ENCODE measurements at regions of chr3 and their contacts with region 1.

Region 1: GRCh38 chr3:30347679-30348216 is 258.7 kb upstream of the TGFBR2 start:
- DNase-seq: peak; percentile 85
- H3K4me3 Mint-ChIP-seq: peak overlapping the region; percentile 53
- H3K27ac Mint-ChIP-seq: peak overlapping the region; percentile 82
- H3K4me1 Mint-ChIP-seq: peaks cover 63% of the 10 kb centered on the region
- H3K27me3 Mint-ChIP-seq: peaks cover 8% of the 10 kb centered on the region

Region 2: GRCh38 chr3:28840976-28841376 is 1506.8 kb before region 1 on chr3:
- intact Hi-C with region 1: loop called (anchors 5 kb)
- DNase-seq: peak; percentile 61
- H3K4me3 Mint-ChIP-seq: peak overlapping the region; percentile 24
- H3K27ac Mint-ChIP-seq: peak overlapping the region; percentile 76
- H3K4me1 Mint-ChIP-seq: peaks cover 19% of the 10 kb centered on the region
- H3K27me3 Mint-ChIP-seq: no peaks in the 10 kb centered on the region

Region 3: DNA sequence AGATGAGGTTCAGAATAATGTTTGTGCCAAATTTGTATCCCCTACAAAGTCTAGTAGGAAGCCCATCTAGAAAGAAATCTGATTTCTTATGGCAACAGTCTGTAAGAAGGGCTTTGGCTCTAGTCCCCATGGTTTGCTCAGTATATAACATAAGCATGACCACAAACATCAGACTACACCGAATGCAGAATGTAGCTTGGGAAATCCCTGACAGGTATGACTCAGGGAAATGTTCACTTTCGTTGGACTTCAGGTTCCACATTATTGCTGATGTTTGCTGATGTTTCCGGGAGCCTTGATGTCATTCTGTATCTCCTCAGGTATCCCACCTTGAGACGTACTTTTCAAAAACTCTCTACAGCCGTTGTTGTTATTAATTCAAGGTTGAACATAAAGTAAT is 45.7 kb before region 1 on chr3:
- intact Hi-C with region 1: loop called (anchors 2 kb)
- DNase-seq: peak; percentile 66
- H3K4me3 Mint-ChIP-seq: no peak overlapping the region
- H3K27ac Mint-ChIP-seq: no peak overlapping the region
- H3K4me1 Mint-ChIP-seq: peaks cover 11% of the 10 kb centered on the region
- H3K27me3 Mint-ChIP-seq: no peaks in the 10 kb centered on the region

Region 4: DNA sequence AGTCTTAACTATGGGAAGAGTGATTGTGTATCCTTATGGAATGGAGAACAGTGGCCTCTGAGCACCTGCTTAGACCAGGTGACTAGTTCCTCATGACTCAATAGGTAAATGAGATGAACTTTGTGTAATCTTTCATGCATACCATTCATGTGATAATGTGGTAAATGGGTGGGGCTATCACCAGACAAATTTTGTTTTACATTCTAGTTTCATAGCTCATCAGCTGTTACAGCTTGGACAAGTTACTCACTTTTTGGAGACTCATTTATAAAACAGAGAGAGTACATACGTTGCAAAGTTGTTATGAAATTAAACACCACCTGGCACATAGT is 155.0 kb after region 1 on chr3:
- intact Hi-C with region 1: loop called (anchors 5 kb)
- DNase-seq: no peak
- H3K4me3 Mint-ChIP-seq: no peak overlapping the region
- H3K27ac Mint-ChIP-seq: no peak overlapping the region
- H3K4me1 Mint-ChIP-seq: peaks cover 26% of the 10 kb centered on the region
- H3K27me3 Mint-ChIP-seq: no peaks in the 10 kb centered on the region

Region 5: GRCh38 chr3:30644593-30645012 is 296.9 kb after region 1 on chr3:
- intact Hi-C with region 1: loop called (anchors 5 kb)
- DNase-seq: peak; percentile 89
- H3K4me3 Mint-ChIP-seq: peak overlapping the region; percentile 61
- H3K27ac Mint-ChIP-seq: peak overlapping the region; percentile 93
- H3K4me1 Mint-ChIP-seq: peaks cover 78% of the 10 kb centered on the region
- H3K27me3 Mint-ChIP-seq: no peaks in the 10 kb centered on the region

Region 6: GRCh38 chr3:30751610-30752299 is 404.0 kb after region 1 on chr3:
- intact Hi-C with region 1: loop called (anchors 5 kb)
- DNase-seq: peak; percentile 83
- H3K4me3 Mint-ChIP-seq: no peak overlapping the region
- H3K27ac Mint-ChIP-seq: no peak overlapping the region
- H3K4me1 Mint-ChIP-seq: peaks cover 36% of the 10 kb centered on the region
- H3K27me3 Mint-ChIP-seq: no peaks in the 10 kb centered on the region

Region 7: DNA sequence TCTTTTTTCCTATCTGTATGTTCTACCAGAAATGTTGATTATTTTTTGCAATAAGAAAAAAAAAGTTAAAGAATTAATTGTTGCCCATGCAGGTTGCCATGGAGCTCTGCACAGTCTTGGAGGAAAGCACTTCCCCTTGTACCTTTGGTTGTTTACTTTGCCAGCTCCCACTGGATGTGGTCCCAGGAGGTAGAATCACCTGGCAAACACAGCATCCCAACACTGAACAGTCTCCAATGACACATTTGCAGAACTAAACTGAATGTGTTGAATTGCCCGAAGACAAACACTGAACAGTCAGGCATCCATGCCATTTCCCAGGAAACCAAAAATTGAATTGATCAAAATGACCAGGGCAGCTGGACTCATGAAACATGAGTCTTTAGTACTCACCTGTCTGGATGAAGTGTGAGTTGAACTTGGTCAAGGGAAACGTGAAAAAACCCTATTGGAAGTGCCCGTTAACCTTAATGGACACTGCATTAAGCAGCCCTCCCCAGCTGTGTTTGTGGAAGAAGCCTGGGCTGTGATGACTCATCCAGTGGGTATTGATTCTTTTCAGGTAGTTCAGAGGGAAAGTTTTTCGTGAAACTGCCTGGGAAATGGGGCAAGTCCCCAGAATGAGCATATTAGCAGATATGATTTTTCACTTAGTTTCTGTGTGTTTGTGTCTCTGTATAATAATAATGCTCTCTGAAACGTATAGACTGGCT is 900.3 kb after region 1 on chr3:
- intact Hi-C with region 1: loop called (anchors 10 kb)
- DNase-seq: no peak
- H3K4me3 Mint-ChIP-seq: no peak overlapping the region
- H3K27ac Mint-ChIP-seq: peak overlapping the region; percentile 31
- H3K4me1 Mint-ChIP-seq: peaks cover 48% of the 10 kb centered on the region
- H3K27me3 Mint-ChIP-seq: no peaks in the 10 kb centered on the region

Measured in activated CD4-positive, alpha-beta T cell treated with anti-CD3 and anti-CD28 coated beads, Interleukin-2, amount 10 ng/mL, durations not matched to agents 24 days and 14 days (primary cell).